Dorsolateral prefrontal cortex (tissue), 120 donors: ENCODE measurements at regions of chr11 and their contacts with region 1.

Region 1: GRCh38 chr11:73856031-73856567 is 20.5 kb downstream of the COA4 start:
- DNase-seq: peak in 3 of 10 donors; percentile 30 to 41 (median 38)
- H3K4me3 ChIP-seq: peak overlapping the region in 25 of 59 donors; percentile 0 to 35 (median 16)
- H3K27ac ChIP-seq: peak overlapping the region; percentile 78 to 99 (median 96)
- H3K27me3 ChIP-seq: no peaks in the 10 kb centered on the region
- CTCF ChIP-seq: peak in 1 of 56 donors; percentile 13

Region 2: GRCh38 chr11:73795925-73796632 is 60.0 kb before region 1 on chr11:
- intact Hi-C with region 1: loop called in 1 of 2 experiments (anchors 2 kb)
- DNase-seq: peak; percentile 72 to 90 (median 84)
- H3K4me3 ChIP-seq: peak overlapping the region in 10 of 59 donors; percentile 3 to 44 (median 14)
- H3K27ac ChIP-seq: peak overlapping the region; percentile 49 to 99 (median 93)
- H3K27me3 ChIP-seq: no peaks in the 10 kb centered on the region
- CTCF ChIP-seq: peak in 5 of 56 donors; percentile 8 to 36 (median 22)

Region 3: GRCh38 chr11:73876424-73877300 is 20.6 kb after region 1 on chr11 and contains the starts of genes COA4 and PAAF1:
- intact Hi-C with region 1: loop called in 1 of 2 experiments (anchors 2 kb)
- DNase-seq: peak; percentile 91 to 98 (median 96)
- H3K4me3 ChIP-seq: peak within 1 kb of the TSS; percentile 59 to 99 (median 83)
- H3K27ac ChIP-seq: peak within 1 kb of the TSS in 58 of 59 donors; percentile 38 to 91 (median 82)
- H3K27me3 ChIP-seq: no peaks in the 10 kb centered on the region
- CTCF ChIP-seq: peak in 26 of 56 donors; percentile 8 to 53 (median 20)
- total RNA-seq, gene COA4: 20.8 to 58.4 (median 35.4) TPM
- total RNA-seq, gene PAAF1: 27.3 to 94.7 (median 55.4) TPM

Region 4: GRCh38 chr11:74094400-74094799 is 238.3 kb after region 1 on chr11:
- intact Hi-C with region 1: no loop called
- DNase-seq: no peak
- H3K4me3 ChIP-seq: no peak overlapping the region
- H3K27ac ChIP-seq: no peak overlapping the region
- H3K27me3 ChIP-seq: no peaks in the 10 kb centered on the region
- CTCF ChIP-seq: no peak